ENCODE measurements at regions of chr2 and their contacts with region 1.

Region 1: GRCh38 chr2:158903711-158904443 is 64.6 kb upstream of the TANC1 start:
- DNase-seq: no peak
- H3K4me3 ChIP-seq: no peak overlapping the region
- H3K27ac ChIP-seq: no peak overlapping the region
- H3K27me3 ChIP-seq: no peaks in the 10 kb centered on the region
- CTCF ChIP-seq: no peak

Region 2: GRCh38 chr2:159118115-159118858 is 214.4 kb after region 1 on chr2:
- intact Hi-C with region 1: loop called (anchors 1 to 2 kb)
- DNase-seq: peak; percentile 80 to 96 (median 88)
- H3K4me3 ChIP-seq: no peak overlapping the region
- H3K27ac ChIP-seq: peak overlapping the region in 6 of 59 donors; percentile 16 to 57 (median 41)
- H3K27me3 ChIP-seq: no peaks in the 10 kb centered on the region
- CTCF ChIP-seq: peak; percentile 92 to 100 (median 97)

Region 3: GRCh38 chr2:159226059-159226461 is 322.2 kb after region 1 on chr2:
- intact Hi-C with region 1: no loop called
- DNase-seq: no peak
- H3K4me3 ChIP-seq: no peak overlapping the region
- H3K27ac ChIP-seq: peak overlapping the region in 13 of 59 donors; percentile 4 to 73 (median 29)
- H3K27me3 ChIP-seq: no peaks in the 10 kb centered on the region
- CTCF ChIP-seq: no peak